MCF 10A (cell line): ENCODE measurements at regions of chr1 and their contacts with region 1.

Region 1: DNA sequence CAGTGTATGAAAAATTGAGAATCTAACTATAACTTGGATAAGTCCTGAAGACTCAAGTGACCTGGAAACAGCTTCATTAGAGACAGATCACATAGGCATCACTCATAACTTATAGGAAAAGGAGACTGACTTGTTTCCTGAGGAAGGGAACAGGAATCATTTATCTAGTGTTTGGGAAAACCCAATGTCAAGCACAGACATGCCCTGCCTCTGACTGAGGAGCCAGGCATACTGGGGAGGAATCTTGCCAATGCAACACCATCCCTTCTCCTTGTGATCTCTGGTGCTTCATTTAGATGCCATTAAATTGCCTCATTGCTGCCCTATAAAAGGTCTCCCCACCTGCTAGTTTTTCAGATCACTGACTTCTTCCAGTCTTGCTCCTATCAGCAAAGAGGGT is 10.3 kb downstream of the LCE4A start:
- DNase-seq: peak; percentile 72
- H3K4me3 Mint-ChIP-seq: no peak overlapping the region
- H3K27ac Mint-ChIP-seq: peak overlapping the region; percentile 13
- H3K4me1 Mint-ChIP-seq: peaks cover 11% of the 10 kb centered on the region
- H3K27me3 Mint-ChIP-seq: no peaks in the 10 kb centered on the region
- CTCF ChIP-seq: no peak

Region 2: DNA sequence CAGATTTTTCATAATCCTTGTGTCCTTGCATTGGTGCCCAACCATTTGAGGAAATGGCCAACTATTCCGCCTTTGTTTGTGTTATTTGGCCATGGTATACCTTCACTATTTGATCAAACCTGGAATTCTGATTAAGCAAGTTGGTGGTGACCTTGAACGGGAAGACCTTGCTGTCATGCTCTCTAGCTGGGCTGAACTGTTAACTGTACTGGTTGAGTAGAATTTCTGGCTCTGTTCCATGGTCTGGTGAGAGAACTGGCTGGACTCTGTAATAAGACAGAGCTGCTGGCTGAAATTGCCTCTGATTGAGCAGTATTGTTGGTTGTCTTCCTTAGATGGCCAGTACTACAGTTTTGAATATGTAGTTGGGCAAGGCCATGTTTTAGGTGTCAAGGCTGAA is 121.3 kb before region 1 on chr1:
- CTCF ChIA-PET with region 1: no interaction called
- POLR2A ChIA-PET with region 1: no interaction called
- intact Hi-C with region 1: no loop called
- DNase-seq: no peak
- H3K4me3 Mint-ChIP-seq: no peak overlapping the region
- H3K27ac Mint-ChIP-seq: no peak overlapping the region
- H3K4me1 Mint-ChIP-seq: no peaks in the 10 kb centered on the region
- H3K27me3 Mint-ChIP-seq: no peaks in the 10 kb centered on the region
- CTCF ChIP-seq: no peak

Region 3: GRCh38 chr1:152707860-152708259 is 10.4 kb before region 1 on chr1 and contains the start of gene LCE4A:
- CTCF ChIA-PET with region 1: interaction called, 3 read pairs
- POLR2A ChIA-PET with region 1: interaction called, 11 read pairs
- intact Hi-C with region 1: no loop called
- DNase-seq: no peak
- H3K4me3 Mint-ChIP-seq: no peak within 1 kb of the TSS
- H3K27ac Mint-ChIP-seq: no peak within 1 kb of the TSS
- H3K4me1 Mint-ChIP-seq: no peaks in the 10 kb centered on the region
- H3K27me3 Mint-ChIP-seq: no peaks in the 10 kb centered on the region
- CTCF ChIP-seq: no peak
- total RNA-seq, gene LCE4A: not detected in 2 replicates

Region 4: GRCh38 chr1:152735648-152736047 is 17.4 kb after region 1 on chr1:
- CTCF ChIA-PET with region 1: interaction called, 14 read pairs
- POLR2A ChIA-PET with region 1: interaction called, 6 read pairs
- intact Hi-C with region 1: no loop called
- DNase-seq: peak; percentile 60
- H3K4me3 Mint-ChIP-seq: no peak overlapping the region
- H3K27ac Mint-ChIP-seq: no peak overlapping the region
- H3K4me1 Mint-ChIP-seq: peaks cover 11% of the 10 kb centered on the region
- H3K27me3 Mint-ChIP-seq: no peaks in the 10 kb centered on the region
- CTCF ChIP-seq: peak; percentile 67